PC-9 (cell line): ENCODE measurements at regions of chr12 and their contacts with region 1.

Region 1: DNA sequence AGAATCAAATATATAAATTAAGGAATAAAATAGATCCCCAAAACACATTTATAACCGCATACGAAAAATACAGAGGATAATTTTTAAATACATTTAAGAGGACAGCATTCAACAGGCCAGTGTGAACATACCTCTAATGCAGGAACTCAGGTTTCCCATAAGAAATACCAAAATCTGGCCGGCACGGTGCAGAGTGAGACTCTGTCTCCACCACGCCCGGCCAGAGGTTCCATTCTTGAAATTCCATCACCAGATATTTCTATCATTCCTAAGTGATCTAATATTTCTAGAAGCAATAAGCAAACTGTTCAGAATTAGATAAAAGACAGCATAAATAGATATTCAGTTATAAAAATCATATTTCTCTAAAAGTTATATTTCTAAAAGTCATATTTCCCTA is 30.2 kb upstream of the OASL start:
- DNase-seq: peak in 1 of 2 experiments; percentile 4
- H3K4me3 ChIP-seq: no peak overlapping the region
- H3K27ac ChIP-seq: no peak overlapping the region
- H3K4me1 ChIP-seq: no peaks in the 10 kb centered on the region
- H3K27me3 ChIP-seq: no peaks in the 10 kb centered on the region
- CTCF ChIP-seq: no peak

Region 2: GRCh38 chr12:121232977-121233627 is 163.9 kb after region 1 on chr12:
- CTCF ChIA-PET with region 1: interaction called, 3 read pairs
- POLR2A ChIA-PET with region 1: no interaction called
- intact Hi-C with region 1: loop called (anchors 2 kb)
- DNase-seq: no peak
- H3K4me3 ChIP-seq: no peak overlapping the region
- H3K27ac ChIP-seq: no peak overlapping the region
- H3K4me1 ChIP-seq: peaks cover 24% of the 10 kb centered on the region
- H3K27me3 ChIP-seq: no peaks in the 10 kb centered on the region
- CTCF ChIP-seq: no peak

Region 3: GRCh38 chr12:121345151-121345815 is 276.1 kb after region 1 on chr12:
- CTCF ChIA-PET with region 1: no interaction called
- POLR2A ChIA-PET with region 1: no interaction called
- intact Hi-C with region 1: no loop called
- DNase-seq: no peak
- H3K4me3 ChIP-seq: no peak overlapping the region
- H3K27ac ChIP-seq: no peak overlapping the region
- H3K4me1 ChIP-seq: no peaks in the 10 kb centered on the region
- H3K27me3 ChIP-seq: no peaks in the 10 kb centered on the region
- CTCF ChIP-seq: no peak